BJ (cell line): ENCODE measurements at regions of chr14 and their contacts with region 1.

Region 1: GRCh38 chr14:52080817-52081755 is 12.2 kb upstream of the NID2 start:
- DNase-seq: peak; percentile 81
- H3K4me3 ChIP-seq: no peak overlapping the region
- H3K27me3 ChIP-seq: no peaks in the 10 kb centered on the region
- CTCF ChIP-seq: no peak

Region 2: GRCh38 chr14:51989293-51990234 is 91.5 kb before region 1 on chr14 and contains the start of gene RTRAF:
- CTCF ChIA-PET with region 1: no interaction called
- POLR2A ChIA-PET with region 1: no interaction called
- DNase-seq: peak; percentile 65
- H3K4me3 ChIP-seq: peak within 1 kb of the TSS; percentile 100
- H3K27me3 ChIP-seq: no peaks in the 10 kb centered on the region
- CTCF ChIP-seq: no peak
- polyA plus RNA-seq, gene RTRAF: 205 and 348 TPM in 2 replicates

Region 3: GRCh38 chr14:52052288-52052943 is 28.7 kb before region 1 on chr14:
- CTCF ChIA-PET with region 1: no interaction called
- POLR2A ChIA-PET with region 1: no interaction called
- DNase-seq: peak; percentile 84
- H3K4me3 ChIP-seq: no peak overlapping the region
- H3K27me3 ChIP-seq: no peaks in the 10 kb centered on the region
- CTCF ChIP-seq: no peak

Region 4: DNA sequence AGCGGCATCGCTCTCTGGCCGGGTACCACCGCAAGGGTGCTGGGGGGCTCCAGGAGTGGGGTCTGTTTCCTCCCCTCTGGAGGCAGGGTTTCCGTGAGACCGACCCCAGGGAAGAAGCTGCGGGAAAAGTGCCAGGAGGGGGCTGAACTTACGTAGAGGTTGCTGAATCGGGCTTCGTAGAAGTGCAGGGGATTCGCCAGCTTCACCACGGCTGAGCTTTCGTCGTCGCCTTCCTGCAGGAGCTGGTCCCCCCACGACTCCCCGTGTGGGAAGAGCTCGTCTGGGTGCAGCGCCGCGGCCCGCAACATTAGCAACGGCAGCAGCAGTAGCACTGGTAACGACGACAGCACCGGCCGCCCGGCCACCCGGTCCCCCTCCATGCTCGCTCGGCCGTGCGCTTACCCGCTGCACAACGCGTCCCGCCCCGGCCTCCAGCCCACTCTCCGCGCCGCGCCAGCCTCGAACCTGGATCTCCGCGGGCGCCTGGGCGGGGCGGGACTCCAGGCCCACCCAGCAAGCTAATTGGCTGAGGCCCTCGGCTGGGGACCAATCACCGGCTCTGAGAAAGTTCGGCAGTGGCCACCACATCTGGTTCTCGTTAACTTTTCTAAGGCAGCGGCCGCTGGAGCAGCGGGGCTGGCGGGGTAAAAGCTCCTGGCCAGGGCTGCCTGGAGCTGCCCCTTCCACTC is 12.3 kb before region 1 on chr14 and contains the start of gene NID2:
- CTCF ChIA-PET with region 1: interaction called, 13 read pairs
- POLR2A ChIA-PET with region 1: interaction called, 5 read pairs
- DNase-seq: no peak
- H3K4me3 ChIP-seq: peak within 1 kb of the TSS; percentile 89
- H3K27me3 ChIP-seq: no peaks in the 10 kb centered on the region
- CTCF ChIP-seq: 0 out of 2 replicates have a peak, but pooled peaks have one; percentile 8
- polyA plus RNA-seq, gene NID2: 253 and 279 TPM in 2 replicates

Region 5: DNA sequence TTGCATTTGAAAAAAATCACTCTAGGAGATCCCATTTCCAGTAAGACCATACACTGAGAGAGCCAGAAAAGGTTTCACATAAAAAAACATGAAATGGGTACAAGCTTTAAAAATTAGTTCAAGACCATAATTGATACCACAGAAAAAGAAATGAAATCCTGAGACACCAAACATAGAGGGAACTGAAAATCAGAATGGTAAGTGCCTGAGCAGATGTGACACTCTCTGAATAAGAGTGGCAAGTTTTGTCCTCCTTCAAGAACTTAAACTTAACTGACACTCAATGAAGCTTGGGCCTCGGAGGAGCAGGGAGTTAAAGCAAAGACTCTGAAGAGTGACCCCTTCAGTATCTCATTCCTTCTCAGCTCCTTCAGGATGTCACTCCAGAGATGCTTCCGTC is 163.2 kb after region 1 on chr14:
- CTCF ChIA-PET with region 1: no interaction called
- POLR2A ChIA-PET with region 1: no interaction called
- DNase-seq: no peak
- H3K4me3 ChIP-seq: no peak overlapping the region
- H3K27me3 ChIP-seq: peaks cover 6% of the 10 kb centered on the region
- CTCF ChIP-seq: no peak